HepG2 (cell line): ENCODE measurements at regions of chr17 and their contacts with region 1.

Region 1: DNA sequence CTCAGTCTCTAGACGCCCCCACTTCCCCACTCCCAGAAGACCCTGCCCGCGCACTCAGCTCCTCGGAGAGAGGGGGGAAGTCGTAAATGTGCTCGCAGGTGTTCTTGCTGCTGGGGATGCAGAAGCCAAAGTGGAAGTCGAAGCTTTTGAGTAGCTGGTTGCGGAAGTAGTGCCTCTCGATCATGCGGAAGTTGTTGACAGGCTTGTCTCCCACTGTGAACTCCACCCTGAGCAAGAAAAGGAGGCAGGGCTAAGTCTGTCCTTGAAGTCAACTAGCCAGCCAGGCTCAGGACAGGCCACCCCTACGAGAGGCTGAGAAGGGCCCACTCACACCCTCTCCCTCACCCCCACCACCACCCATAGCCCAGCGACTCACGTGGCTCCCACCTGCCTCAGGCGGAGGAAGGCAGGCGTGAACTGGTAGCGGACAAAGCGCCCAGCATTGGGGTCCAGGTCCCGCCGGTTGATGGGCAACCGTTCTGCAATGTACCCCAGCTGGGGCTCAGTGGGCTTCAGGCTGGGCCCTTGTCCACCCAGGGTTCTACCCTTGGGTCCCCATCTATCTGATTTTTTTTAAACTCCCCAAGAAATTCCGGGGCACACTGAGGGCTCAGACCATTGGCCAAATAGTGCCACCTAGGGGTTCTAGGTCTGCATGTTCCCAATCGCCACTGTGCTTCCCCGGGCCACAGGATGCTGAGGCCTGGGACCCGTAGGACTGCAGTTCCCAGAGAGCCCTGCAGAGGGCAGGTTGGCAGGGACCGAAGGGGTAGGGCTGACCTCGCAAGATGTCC is 4.6 kb downstream of the UNC119 start:
- DNase-seq: peak; percentile 60
- ATAC-seq: peak; percentile 60
- H3K4me3 ChIP-seq: no peak overlapping the region
- H3K27ac ChIP-seq: no peak overlapping the region
- H3K4me1 ChIP-seq: peaks cover 31% of the 10 kb centered on the region
- H3K27me3 ChIP-seq: no peaks in the 10 kb centered on the region
- CTCF ChIP-seq: peak; percentile 80
- EP300 ChIP-seq: no peak
- POLR2A ChIP-seq: no peak
- RAD21 ChIP-seq: peak; percentile 44; the same call in 1 of the 2 replicates

Region 2: GRCh38 chr17:28612936-28613872 is 65.4 kb after region 1 on chr17:
- CTCF ChIA-PET with region 1: interaction called, 5 read pairs
- POLR2A ChIA-PET with region 1: interaction called, 3 read pairs
- in situ Hi-C with region 1: no loop called
- intact Hi-C with region 1: loop called (anchors 2 kb)
- DNase-seq: peak; percentile 52
- ATAC-seq: peak; percentile 81
- H3K4me3 ChIP-seq: no peak overlapping the region
- H3K27ac ChIP-seq: no peak overlapping the region
- H3K4me1 ChIP-seq: no peaks in the 10 kb centered on the region
- H3K27me3 ChIP-seq: no peaks in the 10 kb centered on the region
- CTCF ChIP-seq: peak; percentile 79
- EP300 ChIP-seq: no peak
- POLR2A ChIP-seq: no peak
- RAD21 ChIP-seq: peak; percentile 38; the same call in 1 of the 2 replicates